ENCODE measurements at regions of chr13 and their contacts with region 1.

Region 1: GRCh38 chr13:40401911-40402776 is 264.3 kb downstream of the FOXO1 start:
- DNase-seq: peak; percentile 81
- H3K4me3 Mint-ChIP-seq: peak overlapping the region; percentile 14
- H3K27ac Mint-ChIP-seq: peak overlapping the region; percentile 86
- H3K4me1 Mint-ChIP-seq: peaks cover 19% of the 10 kb centered on the region
- H3K27me3 Mint-ChIP-seq: no peaks in the 10 kb centered on the region
- CTCF ChIP-seq: no peak

Region 2: GRCh38 chr13:40206241-40207000 is 195.7 kb before region 1 on chr13:
- CTCF ChIA-PET with region 1: no interaction called
- intact Hi-C with region 1: loop called (anchors 1 kb)
- DNase-seq: peak; percentile 64
- H3K4me3 Mint-ChIP-seq: peak overlapping the region; percentile 22
- H3K27ac Mint-ChIP-seq: peak overlapping the region; percentile 96
- H3K4me1 Mint-ChIP-seq: peaks cover 25% of the 10 kb centered on the region
- H3K27me3 Mint-ChIP-seq: no peaks in the 10 kb centered on the region
- CTCF ChIP-seq: no peak

Region 3: GRCh38 chr13:40963919-40964318 is 561.8 kb after region 1 on chr13:
- CTCF ChIA-PET with region 1: no interaction called
- intact Hi-C with region 1: no loop called
- DNase-seq: no peak
- H3K4me3 Mint-ChIP-seq: no peak overlapping the region
- H3K27ac Mint-ChIP-seq: peak overlapping the region; percentile 47
- H3K4me1 Mint-ChIP-seq: peaks cover 20% of the 10 kb centered on the region
- H3K27me3 Mint-ChIP-seq: no peaks in the 10 kb centered on the region
- CTCF ChIP-seq: no peak